Astrocyte of the cerebellum (primary cell): ENCODE measurements at regions of chr19 and their contacts with region 1.

Region 1: GRCh38 chr19:40055832-40056504 is at the start of gene ZNF780B:
- DNase-seq: peak; percentile 4
- H3K4me3 ChIP-seq: peak within 1 kb of the TSS; percentile 78
- CTCF ChIP-seq: no peak

Region 2: GRCh38 chr19:40023969-40024368 is 32.0 kb before region 1 on chr19:
- in situ Hi-C with region 1: loop called (anchors 5 kb)
- DNase-seq: no peak
- H3K4me3 ChIP-seq: no peak overlapping the region
- CTCF ChIP-seq: no peak